ENCODE measurements at regions of chr3 and their contacts with region 1.

Region 1: GRCh38 chr3:133040696-133041523 is 2.7 kb downstream of the TMEM108 start:
- DNase-seq: peak; percentile 79
- H3K4me3 ChIP-seq: no peak overlapping the region
- H3K27ac ChIP-seq: no peak overlapping the region
- H3K4me1 ChIP-seq: no peaks in the 10 kb centered on the region
- H3K27me3 ChIP-seq: peaks cover 57% of the 10 kb centered on the region

Region 2: DNA sequence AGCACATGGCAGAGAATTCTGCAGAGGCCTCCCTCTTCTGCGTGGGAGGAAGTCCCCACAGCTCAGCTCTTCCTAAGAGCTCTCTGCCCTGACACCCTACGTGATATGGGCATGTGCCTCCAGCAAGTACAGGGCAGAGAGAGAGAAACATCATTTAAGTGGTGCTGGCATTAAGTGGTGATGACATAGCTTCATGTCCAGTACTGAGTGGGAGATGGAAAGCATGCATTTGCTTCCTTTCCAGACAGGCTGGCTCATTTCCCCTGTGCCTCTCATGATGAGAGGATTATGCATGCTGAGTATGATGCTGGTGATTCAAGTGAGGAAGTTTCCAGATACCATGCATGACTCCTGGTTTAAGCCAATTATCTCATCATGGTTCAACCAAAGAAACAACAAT is 385.8 kb after region 1 on chr3:
- in situ Hi-C with region 1: loop called (anchors 10 kb)
- DNase-seq: peak; percentile 95
- H3K4me3 ChIP-seq: no peak overlapping the region
- H3K27ac ChIP-seq: peak overlapping the region; percentile 26
- H3K4me1 ChIP-seq: peaks cover 10% of the 10 kb centered on the region; the same call in 1 of the 2 replicates
- H3K27me3 ChIP-seq: no peaks in the 10 kb centered on the region; the same call in 1 of the 2 replicates

Measured in GM23248 (cell line).